ENCODE measurements at regions of chr6 and their contacts with region 1.

Region 1: GRCh38 chr6:111997078-111997852 is 56.6 kb upstream of the CCN6 start:
- DNase-seq: peak; percentile 71
- CTCF ChIP-seq: peak; percentile 87

Region 2: DNA sequence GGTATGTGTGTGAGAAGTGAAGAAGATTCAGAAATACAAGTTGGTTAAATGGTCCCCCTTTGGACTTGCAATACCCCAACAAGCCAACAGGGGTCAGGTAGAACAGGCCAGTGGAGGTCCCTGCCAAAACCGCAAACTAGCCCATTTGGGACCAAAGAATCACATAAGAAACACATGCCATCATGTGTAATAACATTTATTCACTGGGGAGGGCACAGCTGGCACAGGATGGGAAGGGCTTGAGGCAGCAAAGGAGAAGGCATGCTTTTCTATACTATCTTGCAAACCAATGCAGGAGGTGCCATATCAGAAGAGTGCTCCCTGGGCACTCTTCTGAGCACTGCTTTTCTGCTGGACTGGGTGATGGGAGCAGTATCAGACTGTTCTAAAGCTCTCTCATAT is 275.5 kb before region 1 on chr6:
- CTCF ChIA-PET with region 1: interaction called, 12 read pairs
- POLR2A ChIA-PET with region 1: no interaction called
- DNase-seq: peak; percentile 48
- CTCF ChIP-seq: peak; percentile 46

Region 3: GRCh38 chr6:112010328-112010727 is 13.1 kb after region 1 on chr6:
- CTCF ChIA-PET with region 1: interaction called, 13 read pairs
- POLR2A ChIA-PET with region 1: no interaction called
- DNase-seq: no peak
- CTCF ChIP-seq: peak; percentile 4

Region 4: DNA sequence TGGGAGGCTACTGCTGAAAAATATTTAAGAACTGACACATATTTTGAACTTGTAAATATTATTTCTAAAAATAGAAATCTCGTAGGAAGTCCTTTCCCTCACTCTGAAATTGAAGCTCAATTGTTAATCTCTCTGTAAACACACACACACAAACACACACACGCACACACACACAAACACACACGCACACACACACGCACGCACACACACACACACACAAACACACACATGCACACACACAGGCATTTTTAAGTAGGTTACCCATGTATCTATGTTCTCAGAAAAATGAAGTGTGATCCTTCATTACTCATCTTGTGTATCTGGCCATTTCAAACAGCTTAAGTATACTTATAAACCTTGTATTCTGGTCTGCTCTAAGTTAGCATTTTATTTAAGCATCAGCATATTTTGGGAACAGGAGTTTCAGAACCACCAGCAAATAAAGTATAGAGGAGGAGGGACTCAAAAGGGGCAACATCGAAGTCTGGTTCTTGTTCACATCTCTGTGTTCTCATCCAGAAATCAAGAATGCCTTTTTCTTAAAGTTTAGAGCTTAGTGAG is 68.2 kb after region 1 on chr6:
- CTCF ChIA-PET with region 1: no interaction called
- POLR2A ChIA-PET with region 1: no interaction called
- DNase-seq: no peak
- CTCF ChIP-seq: no peak